Caco-2 (cell line): ENCODE measurements at regions of chr14 and their contacts with region 1.

Region 1: DNA sequence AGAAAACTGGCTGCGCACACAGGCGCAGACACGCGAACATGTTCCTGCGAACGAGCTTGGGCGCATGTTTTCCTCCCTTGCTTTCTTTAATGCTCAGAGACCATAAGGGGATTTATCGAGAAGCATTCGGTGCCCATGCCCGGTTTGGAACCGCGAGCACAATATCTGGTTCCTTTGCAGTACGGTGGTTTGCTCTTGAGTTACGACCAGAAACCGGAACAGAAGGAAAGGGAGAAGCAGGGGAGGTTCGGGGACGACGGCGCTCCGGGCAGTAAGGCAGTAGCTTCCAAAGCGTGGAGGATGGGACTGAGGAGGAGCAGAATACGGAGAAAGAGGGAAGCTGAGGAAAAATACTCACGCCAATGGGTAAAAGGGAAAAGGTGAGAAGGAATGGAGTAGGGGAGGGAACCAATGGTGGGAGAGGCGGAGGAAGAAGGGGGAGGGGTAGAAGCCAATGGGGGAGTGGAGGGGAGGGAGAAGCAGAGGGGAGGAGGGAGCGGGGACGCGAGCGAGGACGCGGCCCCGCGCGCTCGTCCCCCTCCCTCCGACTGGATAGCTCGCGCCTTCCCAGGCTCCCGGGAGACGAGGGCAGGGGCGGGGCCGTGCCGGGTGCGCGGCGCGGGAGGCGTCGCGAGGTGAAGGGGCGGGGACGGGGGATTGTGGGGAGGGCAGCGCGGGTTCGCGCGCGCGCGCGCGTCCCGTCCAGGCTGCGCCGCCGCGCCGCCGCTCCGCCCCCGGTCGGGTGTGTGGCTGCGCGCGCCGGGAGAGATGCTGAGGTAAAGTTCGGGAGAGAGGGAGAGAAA is 625 bp upstream of the ARHGAP5 start:
- DNase-seq: peak; percentile 97
- H3K4me3 ChIP-seq: peak overlapping the region; percentile 72
- H3K4me3 Mint-ChIP-seq: peak overlapping the region; percentile 87
- H3K27ac Mint-ChIP-seq: peak overlapping the region; percentile 77
- H3K4me1 ChIP-seq: peaks cover 34% of the 10 kb centered on the region
- H3K4me1 Mint-ChIP-seq: peaks cover 27% of the 10 kb centered on the region
- H3K27me3 ChIP-seq: no peaks in the 10 kb centered on the region
- H3K27me3 Mint-ChIP-seq: no peaks in the 10 kb centered on the region
- CTCF ChIP-seq: no peak

Region 2: GRCh38 chr14:32087173-32087861 is 10.8 kb after region 1 on chr14:
- CTCF ChIA-PET with region 1: no interaction called
- POLR2A ChIA-PET with region 1: interaction called, 4 read pairs
- intact Hi-C with region 1: loop called (anchors 1 kb)
- DNase-seq: peak in 1 of 2 experiments; percentile 57
- H3K4me3 ChIP-seq: no peak overlapping the region
- H3K4me3 Mint-ChIP-seq: no peak overlapping the region
- H3K27ac Mint-ChIP-seq: peak overlapping the region; percentile 20
- H3K4me1 ChIP-seq: peaks cover 68% of the 10 kb centered on the region
- H3K4me1 Mint-ChIP-seq: peaks cover 44% of the 10 kb centered on the region
- H3K27me3 ChIP-seq: no peaks in the 10 kb centered on the region
- H3K27me3 Mint-ChIP-seq: no peaks in the 10 kb centered on the region
- CTCF ChIP-seq: no peak

Region 3: DNA sequence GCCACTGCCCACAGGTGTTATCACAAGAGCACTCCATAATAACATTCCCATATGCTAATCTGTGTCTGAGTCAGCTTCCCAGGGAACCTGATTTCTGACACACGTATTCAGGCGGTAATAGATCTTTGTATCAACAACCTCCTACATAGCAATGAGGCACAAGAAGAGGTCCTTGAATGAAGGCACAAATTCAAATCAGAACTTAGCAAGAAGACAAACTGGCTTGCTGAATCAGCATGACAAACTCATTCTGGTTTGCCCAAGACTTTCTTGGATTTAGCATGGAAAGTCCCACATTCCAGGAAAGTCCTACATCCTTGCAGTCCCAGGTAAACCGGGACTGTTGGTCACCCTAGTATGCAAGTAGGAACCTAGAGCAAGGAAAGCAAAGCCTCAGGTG is 91.4 kb after region 1 on chr14:
- CTCF ChIA-PET with region 1: no interaction called
- POLR2A ChIA-PET with region 1: no interaction called
- intact Hi-C with region 1: no loop called
- DNase-seq: no peak
- H3K4me3 ChIP-seq: no peak overlapping the region
- H3K4me3 Mint-ChIP-seq: no peak overlapping the region
- H3K27ac Mint-ChIP-seq: no peak overlapping the region
- H3K4me1 ChIP-seq: no peaks in the 10 kb centered on the region
- H3K4me1 Mint-ChIP-seq: no peaks in the 10 kb centered on the region
- H3K27me3 ChIP-seq: no peaks in the 10 kb centered on the region
- H3K27me3 Mint-ChIP-seq: no peaks in the 10 kb centered on the region
- CTCF ChIP-seq: no peak

Region 4: DNA sequence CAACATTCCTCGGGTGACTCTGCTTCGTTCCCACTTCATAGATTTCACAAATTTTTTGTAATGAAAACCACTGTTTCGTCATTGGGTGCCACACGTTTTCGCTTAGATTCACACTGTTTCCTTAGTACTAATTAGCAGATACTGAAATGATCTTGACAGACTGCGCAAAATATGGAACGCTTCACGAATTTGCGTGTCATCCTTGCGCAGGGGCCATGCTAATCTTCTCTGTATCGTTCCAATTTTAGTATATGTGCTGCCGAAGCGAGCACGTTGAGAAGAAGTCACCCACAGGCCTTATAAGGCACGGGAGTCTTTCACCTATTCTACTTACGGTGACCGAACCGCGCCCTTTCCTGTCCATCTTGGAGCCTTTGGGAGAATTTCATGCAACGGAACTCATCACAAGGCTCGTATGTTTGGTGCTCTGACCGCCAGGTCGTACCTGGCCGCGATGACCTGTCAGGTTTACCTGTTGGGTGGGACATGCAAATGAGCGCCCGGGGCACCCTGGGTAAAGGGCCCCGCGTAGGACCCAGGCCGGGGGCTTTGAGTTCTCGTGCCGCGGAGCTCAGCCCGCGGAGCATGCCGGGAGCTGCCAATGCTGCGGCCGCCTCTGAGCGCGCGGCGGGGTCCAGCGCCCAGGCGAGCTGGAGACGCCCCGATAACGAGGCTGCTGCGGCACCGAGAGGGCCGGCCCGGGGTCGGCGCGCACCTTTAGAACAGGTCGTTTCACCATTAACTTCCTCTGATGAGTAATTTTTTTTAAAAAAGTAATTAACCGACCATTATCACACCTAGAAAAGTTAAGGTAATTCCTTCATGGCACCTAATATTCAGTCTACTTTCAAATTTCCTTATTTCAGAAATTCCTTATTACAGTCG is 126.8 kb after region 1 on chr14 and contains the start of gene RNU6-8:
- CTCF ChIA-PET with region 1: interaction called, 4 read pairs
- POLR2A ChIA-PET with region 1: interaction called, 13 read pairs
- intact Hi-C with region 1: loop called (anchors 1 kb)
- DNase-seq: peak; percentile 95
- H3K4me3 ChIP-seq: peak within 1 kb of the TSS; percentile 76
- H3K4me3 Mint-ChIP-seq: peak within 1 kb of the TSS; percentile 90
- H3K27ac Mint-ChIP-seq: peak within 1 kb of the TSS; percentile 98
- H3K4me1 ChIP-seq: 0 out of 2 replicates have a peak, but pooled peaks cover 5% of the 10 kb centered on the region
- H3K4me1 Mint-ChIP-seq: no peaks in the 10 kb centered on the region
- H3K27me3 ChIP-seq: no peaks in the 10 kb centered on the region
- H3K27me3 Mint-ChIP-seq: no peaks in the 10 kb centered on the region
- CTCF ChIP-seq: no peak
- total RNA-seq, gene RNU6-8: not detected in 2 replicates

Region 5: DNA sequence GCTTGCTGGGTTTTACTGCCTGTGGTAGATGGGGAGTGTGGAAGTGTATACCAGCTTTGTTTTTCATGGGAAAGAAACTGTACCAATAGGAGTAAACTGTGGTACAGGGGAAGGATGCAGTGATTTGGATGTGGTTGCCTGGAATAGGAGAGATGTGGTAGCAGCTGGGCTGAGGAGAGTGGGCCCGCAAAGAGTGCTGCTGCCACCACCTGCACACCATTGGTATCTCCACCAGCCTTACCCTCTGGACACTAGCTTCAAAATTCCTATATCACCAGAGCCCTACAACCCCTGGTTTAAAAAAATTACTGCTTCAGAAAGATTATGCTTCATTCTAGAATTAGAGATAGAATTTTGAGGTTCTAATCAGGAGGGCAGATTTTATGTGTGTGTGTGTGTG is 306.2 kb after region 1 on chr14:
- CTCF ChIA-PET with region 1: no interaction called
- POLR2A ChIA-PET with region 1: no interaction called
- intact Hi-C with region 1: loop called (anchors 1 kb)
- DNase-seq: peak in 1 of 2 experiments; percentile 54
- H3K4me3 ChIP-seq: no peak overlapping the region
- H3K4me3 Mint-ChIP-seq: no peak overlapping the region
- H3K27ac Mint-ChIP-seq: no peak overlapping the region
- H3K4me1 ChIP-seq: peaks cover 64% of the 10 kb centered on the region
- H3K4me1 Mint-ChIP-seq: peaks cover 51% of the 10 kb centered on the region
- H3K27me3 ChIP-seq: no peaks in the 10 kb centered on the region
- H3K27me3 Mint-ChIP-seq: no peaks in the 10 kb centered on the region
- CTCF ChIP-seq: peak; percentile 23 to 63

Region 6: DNA sequence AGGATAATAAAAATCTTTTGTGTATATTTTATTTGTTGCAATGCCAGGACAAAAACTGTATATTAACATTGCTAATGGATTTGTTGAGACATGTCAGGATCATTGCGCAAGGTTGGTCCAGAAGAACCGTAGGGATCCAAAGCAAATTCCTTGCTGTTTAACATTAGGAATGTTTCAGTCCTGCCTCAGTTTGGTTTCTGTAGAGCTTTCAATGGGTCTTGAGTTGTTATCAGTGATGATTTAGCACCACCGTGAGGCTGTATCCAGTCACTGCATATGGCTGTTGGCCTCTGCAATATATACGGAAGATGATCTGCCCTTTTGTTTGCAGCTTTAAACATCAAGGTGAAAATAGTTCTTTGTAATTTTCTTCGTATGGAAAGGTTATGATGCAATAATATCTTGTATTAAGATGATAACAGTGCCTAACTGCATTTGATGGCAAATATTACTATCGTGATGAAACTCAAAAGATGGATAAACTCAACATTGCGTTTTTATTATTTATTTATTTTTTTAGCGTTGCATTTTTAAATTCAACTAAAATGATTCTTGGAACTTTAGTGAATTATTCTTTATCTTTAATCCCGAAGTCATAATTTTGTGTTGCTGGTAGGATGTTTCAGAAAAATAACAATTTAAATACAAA is 483.9 kb after region 1 on chr14:
- CTCF ChIA-PET with region 1: interaction called, 4 read pairs
- POLR2A ChIA-PET with region 1: no interaction called
- intact Hi-C with region 1: loop called (anchors 1 kb)
- DNase-seq: peak; percentile 59 to 71
- H3K4me3 ChIP-seq: no peak overlapping the region
- H3K4me3 Mint-ChIP-seq: no peak overlapping the region
- H3K27ac Mint-ChIP-seq: no peak overlapping the region
- H3K4me1 ChIP-seq: peaks cover 16% of the 10 kb centered on the region
- H3K4me1 Mint-ChIP-seq: no peaks in the 10 kb centered on the region
- H3K27me3 ChIP-seq: no peaks in the 10 kb centered on the region
- H3K27me3 Mint-ChIP-seq: no peaks in the 10 kb centered on the region
- CTCF ChIP-seq: peak; percentile 77 to 79